ENCODE measurements at regions of chr12 and their contacts with region 1.

Region 1: DNA sequence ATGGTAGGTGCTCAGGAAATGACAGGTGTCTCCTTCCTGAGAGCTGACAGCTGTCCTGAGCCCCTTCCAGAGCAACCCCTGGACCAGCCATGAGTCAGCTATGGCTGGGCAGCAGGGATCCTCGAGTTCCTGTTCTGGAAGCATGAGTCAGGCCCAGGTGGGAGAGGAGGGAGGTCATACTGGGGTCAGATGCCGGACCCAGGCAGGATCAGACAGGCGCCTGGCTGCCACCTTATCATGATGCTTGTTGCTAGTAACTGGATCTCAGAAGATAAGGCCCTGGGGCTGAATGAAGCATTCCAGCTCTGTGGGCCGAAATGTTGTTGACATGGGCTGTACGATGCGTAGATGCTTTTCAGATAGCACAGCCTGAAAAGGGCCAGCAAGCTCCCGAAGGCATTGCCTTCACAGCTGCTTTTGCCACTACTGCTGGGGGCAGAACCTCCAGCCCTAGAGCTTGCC is 17.4 kb upstream of the KRT7 start:
- ATAC-seq: peak in 5 of 8 experiments; percentile 54 to 78 (median 74)
- H3K4me3 ChIP-seq: no peak overlapping the region
- H3K27ac ChIP-seq: no peak overlapping the region
- H3K4me1 ChIP-seq: no peaks in the 10 kb centered on the region

Region 2: GRCh38 chr12:51740519-51740918 is 475.1 kb before region 1 on chr12:
- in situ Hi-C with region 1: no loop called
- ATAC-seq: no peak
- H3K4me3 ChIP-seq: no peak overlapping the region
- H3K27ac ChIP-seq: no peak overlapping the region
- H3K4me1 ChIP-seq: no peaks in the 10 kb centered on the region

Region 3: GRCh38 chr12:52167954-52168717 is 47.5 kb before region 1 on chr12:
- in situ Hi-C with region 1: loop called in 1 of 9 experiments (anchors 5 kb)
- ATAC-seq: peak in 2 of 8 experiments; percentile 19 to 20
- H3K4me3 ChIP-seq: no peak overlapping the region
- H3K27ac ChIP-seq: no peak overlapping the region
- H3K4me1 ChIP-seq: no peaks in the 10 kb centered on the region

Region 4: GRCh38 chr12:52280319-52280795 is 64.7 kb after region 1 on chr12:
- in situ Hi-C with region 1: no loop called
- ATAC-seq: peak; percentile 47 to 81 (median 64)
- H3K4me3 ChIP-seq: no peak overlapping the region
- H3K27ac ChIP-seq: no peak overlapping the region
- H3K4me1 ChIP-seq: peaks cover 11 to 17% of the 10 kb centered on the region in 2 donors

Region 5: GRCh38 chr12:52307836-52308805 is 92.5 kb after region 1 on chr12:
- in situ Hi-C with region 1: no loop called
- ATAC-seq: peak; percentile 95 to 98 (median 97)
- H3K4me3 ChIP-seq: peak overlapping the region; percentile 25 to 41 (median 31)
- H3K27ac ChIP-seq: no peak overlapping the region
- H3K4me1 ChIP-seq: no peaks in the 10 kb centered on the region